ENCODE measurements at regions of chr1 and their contacts with region 1.

Region 1: DNA sequence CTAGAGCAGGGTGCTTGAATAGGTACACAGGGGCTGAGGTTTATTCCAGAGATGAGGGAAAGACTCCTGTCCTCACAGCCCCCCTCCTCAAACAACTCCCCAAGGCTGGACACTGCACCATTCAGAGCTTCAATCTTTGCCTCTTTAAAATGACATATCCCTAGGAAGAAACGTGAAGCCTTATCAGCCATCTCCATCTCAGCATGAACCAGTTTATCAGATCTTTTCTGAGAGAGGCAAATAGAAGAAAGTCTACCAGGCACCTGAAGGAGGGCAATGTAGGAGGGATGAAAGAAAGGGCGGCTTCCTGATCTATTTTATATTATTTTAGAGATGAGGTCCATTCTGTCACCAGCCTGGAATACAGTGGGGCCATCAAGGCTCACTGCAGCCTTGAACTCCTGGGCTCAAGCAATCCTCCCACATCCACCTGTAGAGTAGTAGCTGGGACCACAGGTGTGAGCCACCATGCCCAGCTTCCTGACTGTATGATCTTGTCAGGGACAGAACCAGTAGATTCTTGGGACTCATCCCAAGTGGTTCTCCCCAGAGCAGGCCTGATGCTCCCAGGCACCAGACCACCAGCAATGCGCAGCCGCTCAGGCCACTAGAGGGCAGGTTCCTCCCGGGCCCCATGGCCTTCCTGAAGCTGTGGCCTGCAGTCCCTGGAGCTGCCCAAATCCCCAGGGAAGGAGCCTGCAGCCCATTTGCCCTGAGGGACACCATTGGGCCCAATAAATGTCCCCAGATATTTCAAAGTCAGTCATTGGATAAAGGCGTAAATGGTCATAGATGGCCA is 44.4 kb upstream of the GOLT1A start:
- DNase-seq: peak; percentile 74 to 85
- ATAC-seq: peak; percentile 86 to 93
- H3K4me3 ChIP-seq: no peak overlapping the region
- H3K27ac ChIP-seq: peak overlapping the region; percentile 7 to 31; a peak in 1 of 6 replicates
- H3K4me1 ChIP-seq: peaks cover 35% of the 10 kb centered on the region
- CTCF ChIP-seq: peak; percentile 83
- EP300 ChIP-seq: no peak
- POLR2A ChIP-seq: no peak
- RAD21 ChIP-seq: peak; percentile 90 to 92

Region 2: GRCh38 chr1:204219971-204220608 is 38.1 kb before region 1 on chr1:
- CTCF ChIA-PET with region 1: interaction called, 17 read pairs
- POLR2A ChIA-PET with region 1: no interaction called
- DNase-seq: no peak
- ATAC-seq: no peak
- H3K4me3 ChIP-seq: no peak overlapping the region
- H3K27ac ChIP-seq: no peak overlapping the region
- H3K4me1 ChIP-seq: no peaks in the 10 kb centered on the region
- CTCF ChIP-seq: no peak
- EP300 ChIP-seq: no peak
- POLR2A ChIP-seq: no peak
- RAD21 ChIP-seq: no peak

Region 3: DNA sequence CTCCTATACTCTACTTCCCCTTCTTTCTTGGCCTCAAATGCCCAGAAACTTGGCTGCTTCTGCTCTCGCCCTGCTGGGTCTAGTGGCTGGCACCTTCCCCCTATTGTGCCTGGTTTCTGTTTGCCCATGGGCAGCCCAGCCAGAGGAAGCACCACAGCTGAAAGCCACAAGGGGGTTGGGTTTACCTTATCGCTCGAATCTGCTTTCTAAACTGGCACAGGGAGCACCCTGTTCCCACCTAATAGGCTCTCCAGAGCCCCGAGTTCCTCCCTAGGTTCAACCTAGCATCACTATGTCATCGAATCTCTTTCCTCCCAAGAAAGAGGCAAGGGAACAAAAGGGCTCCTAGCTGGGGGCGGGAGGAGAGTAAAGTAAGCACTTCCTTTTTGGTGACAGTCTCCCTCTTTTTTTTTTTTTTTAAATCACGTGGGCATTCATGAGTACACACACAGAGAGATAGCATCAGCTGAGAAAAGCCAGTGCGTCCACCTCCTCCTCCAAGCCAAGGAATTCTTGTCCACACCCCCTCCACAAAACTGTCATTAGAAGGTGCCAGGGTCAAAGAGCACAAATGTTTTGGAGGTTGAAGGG is 28.8 kb after region 1 on chr1:
- CTCF ChIA-PET with region 1: interaction called, 71 read pairs
- POLR2A ChIA-PET with region 1: interaction called, 3 read pairs
- DNase-seq: peak; percentile 30 to 48
- ATAC-seq: peak; percentile 22 to 40
- H3K4me3 ChIP-seq: peak overlapping the region; percentile 38
- H3K27ac ChIP-seq: peak overlapping the region; percentile 71 to 85
- H3K4me1 ChIP-seq: peaks cover 69% of the 10 kb centered on the region
- CTCF ChIP-seq: no peak
- EP300 ChIP-seq: no peak
- POLR2A ChIP-seq: no peak
- RAD21 ChIP-seq: no peak

Region 4: DNA sequence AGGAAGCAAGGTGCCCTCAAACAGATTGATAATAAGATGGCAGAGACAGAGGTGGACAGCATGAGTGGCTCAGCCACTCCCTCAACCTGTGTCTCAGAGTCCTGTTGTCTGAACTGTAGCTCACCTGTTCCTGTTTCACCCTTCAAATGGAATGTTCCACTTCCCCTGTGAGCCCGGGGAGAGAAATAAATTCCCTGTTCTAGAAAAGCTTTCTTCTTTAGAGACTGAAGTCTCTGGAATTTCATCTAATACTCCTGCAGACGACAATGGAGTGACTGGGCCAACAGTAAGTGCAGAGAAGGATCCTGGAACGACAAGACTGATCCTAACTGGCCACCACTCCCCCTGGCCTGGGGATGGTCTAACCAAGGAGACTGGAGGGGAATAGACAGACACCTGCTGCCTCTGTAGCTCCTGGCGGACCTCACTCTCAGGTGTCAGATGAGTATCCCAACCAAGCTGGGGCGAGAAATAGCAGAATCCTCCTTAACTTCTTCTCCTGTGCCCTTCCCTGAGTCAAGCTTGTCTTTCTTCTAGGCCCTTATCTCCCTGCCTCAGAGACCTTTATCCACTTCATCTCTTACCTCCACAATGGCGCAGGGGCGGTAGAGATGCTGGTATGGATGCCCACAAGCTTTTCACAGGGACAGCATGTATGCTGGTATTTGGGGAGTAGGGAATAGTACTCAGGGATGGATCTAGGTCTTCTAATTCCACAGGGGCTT is 56.2 kb after region 1 on chr1:
- CTCF ChIA-PET with region 1: interaction called, 14 read pairs
- POLR2A ChIA-PET with region 1: no interaction called
- DNase-seq: no peak
- ATAC-seq: no peak
- H3K4me3 ChIP-seq: no peak overlapping the region
- H3K27ac ChIP-seq: peak overlapping the region; percentile 38 to 43; a peak in 4 of 6 replicates
- H3K4me1 ChIP-seq: peaks cover 48% of the 10 kb centered on the region
- CTCF ChIP-seq: no peak
- EP300 ChIP-seq: no peak
- POLR2A ChIP-seq: no peak
- RAD21 ChIP-seq: no peak

Region 5: DNA sequence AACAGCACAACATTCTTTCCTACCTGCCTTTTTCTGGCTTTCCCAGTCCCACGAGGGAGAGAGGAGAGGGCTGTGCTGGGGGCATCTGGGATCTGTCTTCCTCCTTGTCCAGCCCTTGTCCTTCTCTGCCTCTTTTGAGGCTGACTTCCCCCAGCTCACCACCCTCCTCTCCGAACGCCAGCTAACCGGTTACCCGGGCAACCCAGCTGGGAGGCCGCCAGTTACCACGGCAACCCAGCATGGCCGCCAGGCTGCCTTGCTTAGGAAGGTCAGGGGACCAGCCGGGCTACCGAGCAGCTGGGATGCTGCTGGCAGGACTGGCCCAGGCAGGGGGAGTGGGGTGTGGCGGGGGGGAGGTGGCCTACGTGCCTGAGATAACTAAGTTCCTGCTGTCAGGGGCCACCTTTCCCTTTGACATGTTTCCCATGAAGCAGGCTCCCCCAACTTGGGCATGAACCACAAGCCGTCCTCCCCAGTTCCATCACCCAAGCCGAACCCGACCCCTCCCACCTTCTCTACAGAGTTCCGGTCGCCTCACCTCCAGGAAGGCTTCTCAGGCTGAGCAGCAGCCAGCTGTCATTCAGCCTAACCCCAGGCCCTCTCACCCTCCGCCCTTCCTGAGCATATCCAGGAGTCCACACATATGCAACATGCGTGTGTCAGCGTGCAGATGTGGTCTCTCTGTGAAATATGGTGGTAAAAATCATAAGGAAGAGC is 92.9 kb after region 1 on chr1:
- CTCF ChIA-PET with region 1: interaction called, 41 read pairs
- POLR2A ChIA-PET with region 1: no interaction called
- DNase-seq: no peak
- ATAC-seq: no peak; a peak in 2 of 6 replicates
- H3K4me3 ChIP-seq: no peak overlapping the region
- H3K27ac ChIP-seq: peak overlapping the region in 1 of 2 experiments; percentile 12; a peak in 1 of 6 replicates
- H3K4me1 ChIP-seq: peaks cover 40% of the 10 kb centered on the region
- CTCF ChIP-seq: no peak
- EP300 ChIP-seq: no peak
- POLR2A ChIP-seq: no peak
- RAD21 ChIP-seq: no peak

Measured in A549 (cell line).